ENCODE measurements at regions of chr7 and their contacts with region 1.

Region 1: DNA sequence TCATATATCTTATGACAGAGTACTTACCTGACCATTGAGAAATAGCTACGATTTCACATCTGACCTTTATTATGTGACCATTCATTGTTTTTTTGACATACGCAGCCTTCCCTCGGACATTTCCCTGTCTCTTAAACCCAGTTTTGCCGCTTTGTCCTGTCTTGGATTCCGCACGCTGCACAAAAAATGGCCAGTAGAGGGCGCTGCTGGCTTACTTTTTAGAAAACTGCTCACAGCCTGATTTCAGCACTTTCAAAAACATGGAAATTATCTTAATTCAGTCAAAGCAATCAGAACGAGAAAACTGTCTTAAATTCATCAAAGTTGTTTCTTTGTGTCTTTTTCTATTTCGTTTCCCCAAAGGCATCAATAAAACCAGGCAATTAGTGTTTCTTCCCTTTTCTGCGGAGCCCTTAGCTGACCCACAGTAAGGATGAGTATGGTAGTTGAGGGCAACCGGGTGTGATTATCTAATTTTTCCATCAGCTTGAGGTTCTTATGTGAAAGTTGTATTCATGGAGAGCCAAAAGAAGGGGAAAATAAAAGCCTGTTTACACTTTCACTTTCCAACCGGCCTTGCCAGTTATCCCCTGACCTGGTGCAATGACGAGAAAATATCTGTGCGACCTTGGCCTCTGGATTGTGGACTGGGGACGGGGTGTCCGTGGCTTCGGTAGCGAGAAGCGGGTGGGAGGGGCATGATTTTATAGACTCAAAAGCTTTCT is 144.4 kb downstream of the DYNC1I1 start:
- DNase-seq: peak; percentile 78 to 80
- ATAC-seq: peak in 7 of 8 donors; percentile 52 to 86 (median 80)
- H3K4me3 ChIP-seq: peak overlapping the region in 3 of 10 donors; percentile 2 to 11 (median 8)
- H3K27ac ChIP-seq: no peak overlapping the region
- H3K4me1 ChIP-seq: peaks cover 0 to 9% (median 0%) of the 10 kb centered on the region in 9 donors
- H3K27me3 ChIP-seq: peaks cover 0 to 6% (median 0%) of the 10 kb centered on the region in 7 donors
- CTCF ChIP-seq: peak; percentile 88 to 96 (median 93)

Region 2: GRCh38 chr7:95737828-95738505 is 178.8 kb before region 1 on chr7:
- intact Hi-C with region 1: no loop called
- DNase-seq: no peak
- ATAC-seq: no peak
- H3K4me3 ChIP-seq: no peak overlapping the region
- H3K27ac ChIP-seq: no peak overlapping the region
- H3K4me1 ChIP-seq: no peaks in the 10 kb centered on the region
- H3K27me3 ChIP-seq: peaks cover 0 to 11% (median 0%) of the 10 kb centered on the region in 7 donors
- CTCF ChIP-seq: no peak

Region 3: GRCh38 chr7:96061844-96062243 is 145.1 kb after region 1 on chr7:
- intact Hi-C with region 1: loop called in 1 of 10 experiments (anchors 10 kb)
- DNase-seq: peak in 1 of 2 donors; percentile 15
- ATAC-seq: peak in 1 of 8 donors; percentile 34
- H3K4me3 ChIP-seq: no peak overlapping the region
- H3K27ac ChIP-seq: no peak overlapping the region
- H3K4me1 ChIP-seq: no peaks in the 10 kb centered on the region
- H3K27me3 ChIP-seq: no peaks in the 10 kb centered on the region
- CTCF ChIP-seq: no peak

Region 4: GRCh38 chr7:96075510-96076349 is 159.0 kb after region 1 on chr7:
- intact Hi-C with region 1: loop called in 3 of 10 experiments (anchors 5 to 10 kb)
- DNase-seq: peak; percentile 50 to 57
- ATAC-seq: peak; percentile 91 to 98 (median 96)
- H3K4me3 ChIP-seq: peak overlapping the region; percentile 25 to 66 (median 60)
- H3K27ac ChIP-seq: no peak overlapping the region
- H3K4me1 ChIP-seq: peaks cover 0 to 13% (median 5%) of the 10 kb centered on the region in 9 donors
- H3K27me3 ChIP-seq: peaks cover 0 to 39% (median 0%) of the 10 kb centered on the region in 7 donors
- CTCF ChIP-seq: peak; percentile 67 to 89 (median 83)

Region 5: DNA sequence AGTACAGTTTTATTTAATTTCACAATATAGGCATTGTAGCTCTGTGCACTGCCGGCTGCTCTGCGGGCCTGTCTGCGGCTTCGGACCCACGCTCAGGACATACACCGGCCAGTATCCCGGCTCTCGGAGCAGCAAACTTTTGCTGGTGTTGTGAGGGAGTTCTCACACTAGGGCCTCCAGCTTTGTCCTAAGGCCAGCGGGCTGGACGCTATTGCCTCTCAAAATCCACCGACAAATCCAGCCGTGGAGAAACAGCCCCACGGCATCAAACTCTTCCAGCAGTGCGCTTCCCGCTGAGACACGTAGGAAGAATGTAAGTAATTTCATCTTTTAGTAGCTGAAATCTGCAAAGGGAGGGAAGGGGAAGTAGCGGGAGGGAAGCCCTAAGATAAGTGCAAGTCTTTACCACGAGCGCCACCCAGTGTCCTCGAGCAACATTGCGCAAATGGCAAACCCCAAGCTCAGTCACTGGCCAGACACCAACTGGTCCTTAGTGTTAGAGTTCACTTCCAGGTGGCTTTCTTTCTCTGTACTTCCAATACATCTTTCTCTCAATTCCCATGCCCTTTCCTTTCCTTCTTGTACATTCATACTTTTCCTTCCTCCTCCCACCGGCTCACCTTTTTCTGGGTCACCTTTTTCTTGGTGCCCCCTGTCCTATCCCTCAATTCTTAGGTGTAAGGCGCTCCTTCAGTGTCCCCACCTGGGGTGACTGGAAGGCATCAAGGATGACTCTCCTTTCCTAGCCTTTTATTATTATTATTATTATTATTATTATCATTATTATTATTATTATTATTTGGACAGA is 1110.9 kb after region 1 on chr7:
- intact Hi-C with region 1: loop called (anchors 2 to 10 kb)
- DNase-seq: peak; percentile 70 to 73
- ATAC-seq: peak; percentile 77 to 91 (median 86)
- H3K4me3 ChIP-seq: peak overlapping the region in 9 of 10 donors; percentile 24 to 61 (median 47)
- H3K27ac ChIP-seq: no peak overlapping the region
- H3K4me1 ChIP-seq: peaks cover 0 to 42% (median 25%) of the 10 kb centered on the region in 9 donors
- H3K27me3 ChIP-seq: peaks cover 9 to 99% (median 91%) of the 10 kb centered on the region in 7 donors
- CTCF ChIP-seq: peak; percentile 44 to 94 (median 88)

Region 6: DNA sequence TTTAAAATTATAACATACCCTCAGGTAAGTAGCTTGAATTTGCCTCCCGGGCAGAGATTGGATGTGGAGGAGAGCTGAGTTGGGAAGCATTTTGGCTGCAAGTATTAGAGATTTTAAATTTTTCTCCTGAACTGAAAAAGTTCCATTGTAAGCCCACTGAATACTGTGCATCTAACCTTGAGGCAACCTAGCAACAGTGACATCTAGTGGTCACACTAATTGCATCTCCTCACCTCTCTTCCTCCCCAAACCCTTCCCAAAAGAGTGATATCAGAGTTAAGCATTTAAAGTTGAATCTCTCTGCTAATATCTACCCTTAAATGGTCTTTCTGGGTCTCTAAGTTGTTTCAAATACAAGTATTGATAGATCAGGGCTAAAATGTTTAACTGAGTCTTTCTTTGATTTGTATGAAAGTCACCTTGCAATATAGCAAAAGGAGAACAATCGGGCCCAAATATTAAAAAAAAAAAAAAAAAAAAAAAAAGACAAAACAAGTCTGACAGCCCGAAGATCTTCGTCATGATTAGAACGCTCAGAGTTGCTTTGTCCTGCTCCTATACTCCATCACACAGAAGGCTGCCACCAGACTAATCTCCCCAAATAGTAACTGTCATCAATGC is 1148.3 kb after region 1 on chr7:
- intact Hi-C with region 1: loop called in 7 of 10 experiments (anchors 5 to 10 kb)
- DNase-seq: no peak
- ATAC-seq: peak in 4 of 8 donors; percentile 62 to 74 (median 66)
- H3K4me3 ChIP-seq: no peak overlapping the region
- H3K27ac ChIP-seq: no peak overlapping the region
- H3K4me1 ChIP-seq: no peaks in the 10 kb centered on the region
- H3K27me3 ChIP-seq: peaks cover 0 to 5% (median 0%) of the 10 kb centered on the region in 7 donors
- CTCF ChIP-seq: peak; percentile 25 to 83 (median 71)

Region 7: DNA sequence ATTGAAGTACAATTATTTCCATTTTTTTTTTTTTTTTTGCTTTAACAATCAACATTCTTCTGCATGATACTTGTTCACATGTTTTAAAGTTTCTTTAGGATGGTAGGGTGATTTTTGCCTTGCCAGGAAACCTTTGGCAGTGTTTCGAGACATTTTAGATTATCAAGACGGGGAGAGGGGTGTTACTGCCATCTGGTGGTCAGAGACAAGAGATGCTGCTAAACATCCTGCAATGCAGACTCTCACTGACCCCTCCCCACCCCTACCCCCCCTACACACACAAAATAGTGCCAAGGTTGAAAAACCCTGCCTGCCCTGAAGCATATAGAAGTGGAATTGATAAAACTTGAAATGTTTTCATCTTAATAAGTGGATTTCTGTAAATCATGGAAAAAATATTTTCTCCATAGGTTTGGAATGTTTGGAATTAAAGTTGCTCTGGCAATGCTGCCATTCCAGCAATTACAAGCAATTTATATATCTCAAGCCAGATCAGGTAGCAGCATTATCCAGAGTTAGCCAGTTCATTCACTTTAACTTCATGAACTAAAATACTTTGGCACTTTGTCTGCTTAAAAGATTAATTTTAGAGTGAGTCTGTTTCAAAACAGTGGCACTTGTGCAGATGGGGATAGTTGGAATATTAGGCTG is 1262.8 kb after region 1 on chr7:
- intact Hi-C with region 1: loop called in 1 of 10 experiments (anchors 10 kb)
- DNase-seq: peak in 1 of 2 donors; percentile 34
- ATAC-seq: peak in 1 of 8 donors; percentile 60
- H3K4me3 ChIP-seq: no peak overlapping the region
- H3K27ac ChIP-seq: no peak overlapping the region
- H3K4me1 ChIP-seq: peaks cover 0 to 7% (median 0%) of the 10 kb centered on the region in 9 donors
- H3K27me3 ChIP-seq: no peaks in the 10 kb centered on the region
- CTCF ChIP-seq: peak; percentile 51 to 91 (median 84)

Region 8: GRCh38 chr7:97835296-97836138 is 1918.8 kb after region 1 on chr7:
- intact Hi-C with region 1: loop called in 1 of 10 experiments (anchors 10 kb)
- DNase-seq: peak; percentile 27 to 31
- ATAC-seq: peak in 2 of 8 donors; percentile 53 to 65
- H3K4me3 ChIP-seq: no peak overlapping the region
- H3K27ac ChIP-seq: no peak overlapping the region
- H3K4me1 ChIP-seq: peaks cover 0 to 4% (median 0%) of the 10 kb centered on the region in 9 donors
- H3K27me3 ChIP-seq: peaks cover 0 to 82% (median 24%) of the 10 kb centered on the region in 7 donors
- CTCF ChIP-seq: peak; percentile 22 to 77 (median 65)

Measured in heart right ventricle (tissue), 16 donors.